SK-N-SH (cell line): ENCODE measurements at regions of chr17 and their contacts with region 1.

Region 1: GRCh38 chr17:40139566-40140058 is 725 bp upstream of the CASC3 start:
- DNase-seq: no peak
- H3K4me3 ChIP-seq: peak overlapping the region; percentile 59 to 65
- H3K27ac ChIP-seq: peak overlapping the region; percentile 85 to 90
- H3K4me1 ChIP-seq: peaks cover 4% of the 10 kb centered on the region in 2 experiments; a peak in 2 of 4 replicates
- H3K27me3 ChIP-seq: no peaks in the 10 kb centered on the region
- CTCF ChIP-seq: no peak
- EP300 ChIP-seq: no peak
- RAD21 ChIP-seq: no peak

Region 2: GRCh38 chr17:40075942-40076498 is 63.6 kb before region 1 on chr17:
- CTCF ChIA-PET with region 1: no interaction called
- POLR2A ChIA-PET with region 1: no interaction called
- DNase-seq: no peak
- H3K4me3 ChIP-seq: no peak overlapping the region
- H3K27ac ChIP-seq: peak overlapping the region in 1 of 2 experiments; percentile 76; a peak in 1 of 4 replicates
- H3K4me1 ChIP-seq: peaks cover 26 to 52% of the 10 kb centered on the region in 2 experiments; a peak in 3 of 4 replicates
- H3K27me3 ChIP-seq: no peaks in the 10 kb centered on the region
- CTCF ChIP-seq: no peak
- EP300 ChIP-seq: no peak
- RAD21 ChIP-seq: no peak

Region 3: GRCh38 chr17:40121181-40122135 is 18.2 kb before region 1 on chr17 and contains the start of gene MSL1:
- CTCF ChIA-PET with region 1: interaction called, 5 read pairs
- POLR2A ChIA-PET with region 1: interaction called, 14 read pairs
- DNase-seq: peak; percentile 98
- H3K4me3 ChIP-seq: peak within 1 kb of the TSS; percentile 81 to 99
- H3K27ac ChIP-seq: peak within 1 kb of the TSS; percentile 89 to 92
- H3K4me1 ChIP-seq: peaks cover 6 to 7% of the 10 kb centered on the region in 2 experiments; a peak in 2 of 4 replicates
- H3K27me3 ChIP-seq: no peaks in the 10 kb centered on the region
- CTCF ChIP-seq: no peak
- EP300 ChIP-seq: no peak
- RAD21 ChIP-seq: no peak
- polyA plus RNA-seq, gene MSL1: 30.2 and 39.8 TPM in 2 replicates